ENCODE measurements at regions of chr5 and their contacts with region 1.

Region 1: DNA sequence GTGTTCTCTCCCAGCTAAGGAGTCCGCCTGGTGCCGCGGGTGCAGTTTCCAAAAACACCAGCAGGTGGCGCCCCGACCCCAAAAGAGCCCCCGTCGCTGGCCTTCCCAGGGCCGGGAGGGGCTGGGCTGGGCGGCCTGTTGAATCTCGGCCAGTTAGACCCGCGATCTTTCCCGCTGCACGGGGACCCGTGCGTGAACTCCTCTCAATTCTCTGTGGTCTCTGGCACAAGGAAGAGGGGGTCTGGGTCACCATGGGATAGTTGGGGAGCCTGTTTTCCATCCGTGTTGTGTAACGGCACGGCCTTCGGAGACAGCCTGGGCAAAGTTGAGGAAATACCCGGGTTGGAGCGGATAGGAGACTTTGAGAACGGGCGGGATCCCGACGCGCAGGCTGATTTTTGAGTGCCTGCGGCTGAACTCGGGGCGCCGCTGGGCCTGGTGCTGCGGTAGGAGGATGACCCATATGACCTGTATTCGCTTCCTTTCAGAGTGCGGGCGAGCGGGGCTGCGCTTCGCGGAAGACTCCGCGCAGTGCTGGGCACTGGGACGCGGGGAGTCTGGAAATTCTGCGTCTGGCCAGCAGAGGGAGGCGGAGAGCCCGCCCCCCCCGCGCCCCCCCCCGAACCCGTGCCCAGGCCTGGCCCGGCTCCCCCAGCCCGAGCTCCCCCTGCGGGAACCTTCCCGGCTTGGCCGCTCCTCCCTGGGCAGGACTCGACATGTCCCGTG is 7.9 kb upstream of the PSD2 start:
- DNase-seq: peak; percentile 85 to 93 (median 86)
- ATAC-seq: peak; percentile 86 to 94 (median 88)
- H3K4me3 ChIP-seq: peak overlapping the region; percentile 51 to 80 (median 65)
- H3K27ac ChIP-seq: peak overlapping the region; percentile 30 to 85 (median 69)
- H3K4me1 ChIP-seq: peaks cover 0 to 20% (median 7%) of the 10 kb centered on the region in 12 donors
- H3K27me3 ChIP-seq: peaks cover 0 to 5% (median 0%) of the 10 kb centered on the region in 9 donors
- CTCF ChIP-seq: peak; percentile 86 to 98 (median 90)
- POLR2A ChIP-seq: no peak

Region 2: GRCh38 chr5:139075066-139076050 is 712.4 kb before region 1 on chr5:
- intact Hi-C with region 1: no loop called
- DNase-seq: no peak
- ATAC-seq: peak in 3 of 4 donors; percentile 30 to 50 (median 46)
- H3K4me3 ChIP-seq: no peak overlapping the region
- H3K27ac ChIP-seq: peak overlapping the region in 1 of 12 donors; percentile 11
- H3K4me1 ChIP-seq: peaks cover 0 to 34% (median 10%) of the 10 kb centered on the region in 12 donors
- H3K27me3 ChIP-seq: no peaks in the 10 kb centered on the region
- CTCF ChIP-seq: no peak
- POLR2A ChIP-seq: no peak

Region 3: GRCh38 chr5:139301808-139302499 is 485.8 kb before region 1 on chr5:
- intact Hi-C with region 1: no loop called
- DNase-seq: no peak
- ATAC-seq: no peak
- H3K4me3 ChIP-seq: no peak overlapping the region
- H3K27ac ChIP-seq: no peak overlapping the region
- H3K4me1 ChIP-seq: peaks cover 13 to 100% (median 91%) of the 10 kb centered on the region in 12 donors
- H3K27me3 ChIP-seq: no peaks in the 10 kb centered on the region
- CTCF ChIP-seq: no peak
- POLR2A ChIP-seq: no peak

Region 4: DNA sequence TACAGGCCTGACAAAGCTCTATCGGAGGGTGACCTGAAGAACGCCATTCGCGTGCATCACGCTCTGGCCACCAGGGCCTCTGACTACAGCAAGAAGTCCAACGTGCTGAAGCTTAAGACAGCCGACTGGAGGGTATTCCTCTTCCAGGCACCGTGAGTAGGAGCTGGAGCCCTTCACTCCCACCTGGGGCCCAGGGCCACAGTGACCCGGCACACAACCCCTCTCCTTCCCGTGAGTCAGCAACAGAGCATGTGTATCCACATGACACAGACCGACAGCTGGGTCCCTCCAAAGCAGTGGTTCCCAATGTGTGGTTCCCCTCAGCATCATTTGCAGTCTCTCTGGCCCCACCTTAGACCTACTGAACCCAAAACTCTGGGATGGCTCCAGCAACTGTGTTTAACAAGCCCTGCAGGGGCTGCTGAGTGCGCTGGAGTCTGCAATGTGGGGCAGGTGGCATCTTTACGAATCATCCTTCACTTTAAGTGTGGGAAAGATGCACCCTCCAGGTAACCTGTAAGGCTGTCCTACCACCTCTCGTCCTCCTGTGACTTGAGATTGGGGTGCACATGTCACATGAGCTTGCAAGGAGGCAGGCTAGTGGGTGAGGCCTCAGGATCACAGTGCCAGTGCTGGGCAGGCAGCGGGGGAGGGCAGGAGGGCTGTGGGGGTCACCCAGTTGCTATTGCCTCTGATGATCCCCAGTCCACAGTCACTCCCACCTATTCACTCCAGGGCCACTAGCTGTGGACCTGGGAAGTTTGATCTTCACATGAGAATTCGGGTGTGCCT is 50.1 kb after region 1 on chr5:
- intact Hi-C with region 1: loop called in 4 of 10 experiments (anchors 5 kb)
- DNase-seq: no peak
- ATAC-seq: no peak
- H3K4me3 ChIP-seq: no peak overlapping the region
- H3K27ac ChIP-seq: no peak overlapping the region
- H3K4me1 ChIP-seq: no peaks in the 10 kb centered on the region
- H3K27me3 ChIP-seq: peaks cover 0 to 5% (median 0%) of the 10 kb centered on the region in 9 donors
- CTCF ChIP-seq: no peak
- POLR2A ChIP-seq: no peak

Region 5: DNA sequence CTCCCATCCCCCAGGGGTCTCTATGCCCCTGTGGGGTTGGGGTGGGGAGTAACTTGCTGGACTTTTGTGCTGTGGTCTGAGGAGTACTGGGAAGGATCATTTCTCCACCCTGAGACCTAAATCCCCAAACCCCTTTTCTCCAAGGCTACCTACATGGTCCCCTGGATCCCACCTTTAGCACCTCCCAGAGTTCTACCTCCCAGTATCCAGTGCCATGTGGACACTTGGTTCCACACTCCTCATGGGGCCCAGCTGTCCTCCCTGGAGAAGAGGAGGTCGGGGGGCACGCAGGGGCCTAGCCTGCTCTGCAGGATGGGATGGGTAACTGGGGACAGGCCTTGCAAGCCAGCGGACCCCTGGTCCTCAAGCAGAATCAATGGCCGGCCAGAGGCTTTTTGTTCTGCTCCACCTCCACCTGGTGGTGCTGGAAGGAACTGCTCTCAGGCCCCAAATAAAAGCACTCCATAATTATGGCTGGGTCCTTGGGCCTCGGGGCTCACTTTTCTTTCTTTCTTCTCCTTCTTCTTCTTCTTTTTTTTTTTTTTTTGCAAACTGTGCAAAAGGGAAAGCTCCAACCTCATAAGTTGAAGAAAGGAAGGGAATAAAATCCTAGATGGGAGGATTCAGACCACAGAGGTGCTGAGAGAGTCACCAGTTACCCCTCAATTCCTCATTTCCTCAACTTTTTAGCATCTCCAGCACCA is 76.3 kb after region 1 on chr5:
- intact Hi-C with region 1: loop called (anchors 1 to 5 kb)
- DNase-seq: peak; percentile 51 to 73 (median 67)
- ATAC-seq: peak; percentile 37 to 79 (median 64)
- H3K4me3 ChIP-seq: no peak overlapping the region
- H3K27ac ChIP-seq: peak overlapping the region in 3 of 12 donors; percentile 12 to 34 (median 30)
- H3K4me1 ChIP-seq: peaks cover 0 to 16% (median 11%) of the 10 kb centered on the region in 12 donors
- H3K27me3 ChIP-seq: no peaks in the 10 kb centered on the region
- CTCF ChIP-seq: peak; percentile 73 to 94 (median 89)
- POLR2A ChIP-seq: no peak

Region 6: DNA sequence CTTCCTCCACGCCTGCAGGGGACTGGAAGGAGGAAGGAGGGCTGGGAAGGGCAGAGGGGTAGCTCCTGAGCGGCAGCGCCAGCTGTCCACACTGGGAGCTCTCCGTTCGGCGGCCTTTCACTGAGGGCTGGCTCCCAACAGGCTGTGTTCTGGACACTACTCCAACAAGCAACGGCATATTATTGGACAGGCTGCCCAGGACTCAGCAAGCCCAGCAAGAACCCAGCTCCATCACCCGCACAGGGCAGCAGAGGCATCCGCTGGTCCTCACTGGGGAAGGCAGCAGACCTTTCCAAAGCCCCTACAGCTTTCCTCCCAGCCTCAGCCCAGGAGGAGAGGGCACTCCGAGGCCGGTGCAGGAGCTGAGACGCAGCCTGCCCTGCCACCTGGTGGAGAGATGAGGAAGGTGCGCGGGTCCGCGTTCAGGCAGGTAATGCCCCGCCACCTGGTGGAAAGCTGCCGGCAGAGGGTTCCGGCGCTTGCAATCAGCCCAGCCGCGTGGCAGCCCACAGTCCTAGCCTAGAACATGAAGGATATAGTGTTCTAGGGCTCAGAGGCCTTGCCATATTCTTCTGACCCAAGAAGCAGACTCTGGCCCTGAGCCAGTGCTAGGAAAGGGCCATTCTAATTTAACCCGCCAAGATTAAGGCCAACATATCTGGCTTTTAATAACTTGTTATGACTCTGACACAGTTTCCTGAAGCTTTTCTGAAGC is 181.0 kb after region 1 on chr5:
- intact Hi-C with region 1: loop called (anchors 1 to 2 kb)
- DNase-seq: peak; percentile 83 to 91 (median 84)
- ATAC-seq: peak; percentile 82 to 98 (median 94)
- H3K4me3 ChIP-seq: peak overlapping the region in 1 of 12 donors; percentile 11
- H3K27ac ChIP-seq: peak overlapping the region in 3 of 12 donors; percentile 16 to 37 (median 20)
- H3K4me1 ChIP-seq: peaks cover 11 to 36% (median 19%) of the 10 kb centered on the region in 12 donors
- H3K27me3 ChIP-seq: peaks cover 0 to 5% (median 0%) of the 10 kb centered on the region in 9 donors
- CTCF ChIP-seq: peak; percentile 98 to 100 (median 99)
- POLR2A ChIP-seq: no peak

Region 7: DNA sequence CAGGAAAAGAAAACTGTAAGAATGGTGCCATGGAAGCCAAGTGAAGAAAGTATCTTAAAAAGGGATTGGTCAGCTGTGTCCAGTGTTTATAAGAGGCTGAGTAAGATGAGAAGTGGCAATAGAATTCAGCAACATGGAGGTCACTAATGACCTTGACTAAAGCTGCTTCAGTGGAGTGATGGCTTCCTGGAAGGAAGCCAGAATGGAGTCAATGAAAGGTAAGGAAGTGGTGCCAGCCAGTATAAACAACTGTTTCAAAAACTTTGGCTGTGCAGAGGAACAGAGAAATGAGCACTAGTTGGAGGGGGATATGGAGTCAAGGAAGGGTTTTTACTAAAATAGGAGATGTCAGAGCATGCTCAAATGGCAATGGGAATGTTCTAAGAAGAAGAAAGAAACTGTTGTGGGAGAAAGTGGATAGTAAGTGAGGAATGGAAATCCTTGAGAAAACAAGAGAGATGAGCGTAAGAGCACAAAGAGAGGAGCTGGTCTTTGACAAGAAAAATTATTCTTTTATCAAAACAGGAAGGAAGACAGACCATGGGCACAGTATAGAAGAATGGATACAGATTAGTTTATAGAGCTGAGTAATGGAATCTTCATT is 266.5 kb after region 1 on chr5:
- intact Hi-C with region 1: loop called in 1 of 10 experiments (anchors 10 kb)
- DNase-seq: no peak
- ATAC-seq: peak in 2 of 4 donors; percentile 36 to 47
- H3K4me3 ChIP-seq: no peak overlapping the region
- H3K27ac ChIP-seq: no peak overlapping the region
- H3K4me1 ChIP-seq: peaks cover 0 to 26% (median 5%) of the 10 kb centered on the region in 12 donors
- H3K27me3 ChIP-seq: peaks cover 0 to 3% (median 0%) of the 10 kb centered on the region in 9 donors
- CTCF ChIP-seq: no peak
- POLR2A ChIP-seq: no peak

Region 8: DNA sequence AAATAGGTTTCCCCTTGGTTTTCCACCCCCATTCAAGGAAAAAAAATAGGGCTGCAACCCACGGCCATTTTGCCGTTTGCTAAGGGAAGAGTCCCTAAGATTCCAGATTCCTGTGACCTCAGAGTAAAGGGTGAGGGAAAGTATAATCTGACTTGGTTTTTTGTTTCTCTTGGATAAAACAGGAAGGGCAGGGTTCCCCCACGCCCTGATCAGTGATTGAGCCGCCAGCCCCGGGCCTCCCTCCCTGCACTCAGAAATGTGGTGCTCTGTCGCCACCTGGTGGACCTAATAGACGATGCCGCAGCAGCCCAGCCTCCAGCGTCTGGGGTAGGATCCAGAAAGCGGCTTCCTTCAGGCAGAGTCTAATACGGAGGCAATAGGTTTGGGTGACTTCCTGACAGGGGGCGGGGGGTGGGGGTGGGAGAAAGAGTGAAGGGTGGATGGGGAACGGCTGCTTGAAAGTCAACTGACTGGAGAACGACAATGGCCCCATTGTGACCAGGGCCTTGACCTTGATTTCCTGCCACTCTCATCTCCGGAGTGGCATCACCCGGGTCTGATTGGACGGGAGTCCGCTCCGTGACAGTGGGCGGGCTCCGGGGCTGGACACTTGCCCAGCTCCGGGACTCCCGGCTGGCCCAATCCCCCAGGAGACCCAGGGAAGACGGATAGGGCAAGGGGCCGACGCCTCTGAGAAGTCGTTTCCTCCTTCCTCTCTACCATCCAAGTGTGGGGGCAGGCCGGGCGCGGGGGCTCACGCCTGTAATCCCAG is 369.5 kb after region 1 on chr5:
- intact Hi-C with region 1: loop called in 8 of 10 experiments (anchors 1 to 5 kb)
- DNase-seq: peak; percentile 88 to 93 (median 90)
- ATAC-seq: peak; percentile 93 to 96 (median 96)
- H3K4me3 ChIP-seq: peak overlapping the region in 11 of 12 donors; percentile 15 to 57 (median 48)
- H3K27ac ChIP-seq: peak overlapping the region in 11 of 12 donors; percentile 11 to 71 (median 43)
- H3K4me1 ChIP-seq: peaks cover 0 to 19% (median 9%) of the 10 kb centered on the region in 12 donors
- H3K27me3 ChIP-seq: no peaks in the 10 kb centered on the region
- CTCF ChIP-seq: peak; percentile 85 to 93 (median 90)
- POLR2A ChIP-seq: no peak